BJ (cell line): ENCODE measurements at regions of chr19 and their contacts with region 1.

Region 1: DNA sequence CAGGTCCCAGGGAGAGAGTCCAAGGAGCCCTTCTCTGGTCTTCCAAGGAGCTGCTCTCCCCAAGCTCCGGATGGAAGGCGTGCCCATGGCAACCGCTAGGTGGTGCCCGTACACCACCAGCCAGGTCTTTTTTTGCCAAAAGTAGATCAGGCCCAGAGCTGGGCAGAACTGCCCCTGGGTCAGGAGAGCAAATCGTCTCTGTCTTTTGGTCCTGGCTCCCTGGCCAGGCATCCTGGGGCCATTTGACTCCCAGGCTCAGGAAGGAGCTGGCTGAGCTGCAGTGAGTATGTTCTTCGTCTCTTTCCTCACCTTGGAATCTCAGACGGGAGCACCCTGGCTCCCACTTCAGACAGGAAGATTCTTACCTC is 24.6 kb upstream of the BCL3 start:
- DNase-seq: no peak
- H3K4me3 ChIP-seq: no peak overlapping the region
- H3K27me3 ChIP-seq: no peaks in the 10 kb centered on the region
- CTCF ChIP-seq: peak; percentile 98

Region 2: DNA sequence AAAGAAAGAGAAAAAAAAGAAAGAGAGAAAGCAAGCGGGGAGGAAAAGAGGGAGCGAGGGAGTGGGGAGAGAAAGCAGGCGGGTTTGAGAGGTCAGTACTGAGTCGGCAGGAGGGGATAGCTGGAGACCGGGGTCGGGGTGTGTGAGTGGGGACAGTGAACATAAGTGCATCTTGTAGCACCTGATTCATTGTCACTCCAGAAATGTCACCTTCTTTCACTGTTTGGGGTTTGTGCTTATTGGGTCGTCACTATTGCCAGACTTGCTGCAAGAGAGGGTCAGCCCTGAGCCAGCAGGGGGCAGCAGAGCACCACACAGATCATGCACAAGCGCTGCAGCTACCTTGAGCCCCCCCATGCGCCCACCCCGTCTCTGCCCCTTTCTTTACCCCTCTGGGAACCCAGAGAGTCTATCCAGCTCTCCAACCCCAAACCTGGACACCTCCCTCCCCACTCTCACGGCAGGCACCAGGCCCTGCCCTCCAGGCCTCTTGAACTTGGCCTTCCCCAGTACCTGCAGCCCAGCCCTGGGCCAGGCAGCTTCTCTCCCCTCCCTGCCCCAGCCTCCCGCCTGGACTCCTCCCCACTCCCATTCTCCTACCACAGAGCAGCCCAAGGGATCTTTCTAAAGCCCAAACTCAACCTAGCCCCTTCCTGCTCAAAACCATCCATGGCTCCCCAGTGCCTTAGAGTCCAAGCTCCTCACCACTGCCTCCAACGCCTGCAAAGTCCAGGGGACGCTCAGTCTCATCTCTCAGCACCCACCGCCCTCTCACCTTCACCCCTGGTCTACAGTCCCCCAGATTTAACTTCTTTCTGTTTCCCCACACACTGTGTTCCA is 34.7 kb before region 1 on chr19:
- CTCF ChIA-PET with region 1: interaction called, 61 read pairs
- POLR2A ChIA-PET with region 1: no interaction called
- DNase-seq: no peak
- H3K4me3 ChIP-seq: no peak overlapping the region
- H3K27me3 ChIP-seq: no peaks in the 10 kb centered on the region
- CTCF ChIP-seq: peak; percentile 97

Region 3: GRCh38 chr19:44712864-44713515 is 10.9 kb before region 1 on chr19:
- CTCF ChIA-PET with region 1: interaction called, 13 read pairs
- POLR2A ChIA-PET with region 1: no interaction called
- DNase-seq: no peak
- H3K4me3 ChIP-seq: no peak overlapping the region
- H3K27me3 ChIP-seq: no peaks in the 10 kb centered on the region
- CTCF ChIP-seq: no peak

Region 4: GRCh38 chr19:44752816-44753618 is 29.1 kb after region 1 on chr19:
- CTCF ChIA-PET with region 1: interaction called, 36 read pairs
- POLR2A ChIA-PET with region 1: no interaction called
- DNase-seq: peak; percentile 78
- H3K4me3 ChIP-seq: peak overlapping the region; percentile 44
- H3K27me3 ChIP-seq: no peaks in the 10 kb centered on the region
- CTCF ChIP-seq: peak; percentile 11; the same call in 1 of the 2 replicates

Region 5: DNA sequence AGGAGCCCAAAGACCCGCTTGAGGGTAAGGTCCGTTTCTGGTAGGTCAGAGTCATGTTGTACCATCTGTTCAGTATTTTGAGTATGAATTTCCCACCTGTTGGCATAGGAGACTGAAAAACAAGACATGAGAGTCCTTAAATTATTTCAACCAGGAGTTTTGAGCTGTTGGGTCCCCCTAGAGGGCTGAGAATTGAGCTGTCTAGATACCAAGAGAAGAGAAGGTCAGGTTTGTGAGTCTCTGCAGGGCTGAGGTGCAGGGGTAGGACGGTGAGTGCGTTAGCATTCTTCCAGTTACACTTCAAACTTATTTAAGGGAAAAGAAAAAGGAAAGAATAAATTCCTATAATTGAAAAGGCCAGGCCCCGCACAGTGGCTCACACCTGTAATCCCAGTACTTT is 58.8 kb after region 1 on chr19:
- CTCF ChIA-PET with region 1: interaction called, 20 read pairs
- POLR2A ChIA-PET with region 1: no interaction called
- DNase-seq: no peak
- H3K4me3 ChIP-seq: no peak overlapping the region
- H3K27me3 ChIP-seq: no peaks in the 10 kb centered on the region
- CTCF ChIP-seq: no peak; the same call in 1 of the 2 replicates